H1 (cell line): ENCODE measurements at regions of chr20 and their contacts with region 1.

Region 1: DNA sequence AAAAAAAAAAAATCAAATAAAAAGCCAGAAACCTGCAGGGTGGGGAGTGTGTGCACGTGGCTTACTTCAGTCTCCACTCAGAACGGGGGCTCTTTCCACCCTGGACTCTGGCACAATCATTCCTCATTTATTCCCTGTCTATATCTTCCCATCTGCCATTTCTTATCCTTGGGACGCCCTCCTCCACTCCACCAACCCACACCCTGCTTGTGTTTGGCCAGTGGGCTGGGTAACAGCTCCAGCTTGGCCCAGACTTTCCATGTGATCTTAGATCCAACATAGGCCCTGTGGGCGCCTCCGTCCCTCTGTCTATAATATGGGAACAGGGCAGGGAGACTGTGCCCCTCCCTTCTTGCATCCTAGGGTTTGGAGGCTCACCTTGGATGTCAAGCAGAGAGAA is 68.1 kb downstream of the CD40 start:
- DNase-seq: no peak
- H3K4me3 ChIP-seq: no peak overlapping the region
- H3K27ac ChIP-seq: no peak overlapping the region
- H3K4me1 ChIP-seq: no peaks in the 10 kb centered on the region
- H3K27me3 ChIP-seq: no peaks in the 10 kb centered on the region; a peak in 1 of 7 replicates
- CTCF ChIP-seq: no peak
- EP300 ChIP-seq: no peak
- POLR2A ChIP-seq: no peak
- RAD21 ChIP-seq: no peak

Region 2: DNA sequence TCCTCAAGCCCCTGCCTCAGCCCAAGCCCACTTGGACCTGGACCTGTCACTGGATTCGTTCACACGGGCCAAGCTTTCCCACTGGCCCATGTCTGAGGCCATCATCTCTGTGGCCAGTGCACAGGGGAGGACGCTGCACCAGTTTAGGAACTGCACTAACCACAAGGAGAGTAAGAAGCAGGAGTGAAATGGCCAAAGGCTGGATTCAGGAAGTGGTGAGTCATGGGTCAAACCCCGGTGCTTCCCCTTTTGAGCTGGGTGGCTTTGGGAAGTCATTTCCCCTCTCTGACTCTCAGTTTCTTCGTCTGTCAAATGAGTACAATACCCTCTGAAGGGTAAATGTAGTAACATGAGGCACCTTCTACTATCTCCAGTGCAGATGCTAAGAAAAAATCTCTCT is 19.8 kb after region 1 on chr20:
- CTCF ChIA-PET with region 1: interaction called, 11 read pairs
- POLR2A ChIA-PET with region 1: interaction called, 3 read pairs
- DNase-seq: no peak
- H3K4me3 ChIP-seq: no peak overlapping the region
- H3K27ac ChIP-seq: no peak overlapping the region
- H3K4me1 ChIP-seq: peaks cover 0 to 11% (median 5%) of the 10 kb centered on the region in 4 experiments; a peak in 5 of 7 replicates
- H3K27me3 ChIP-seq: peaks cover 0 to 2% (median 0%) of the 10 kb centered on the region in 4 experiments; a peak in 2 of 7 replicates
- CTCF ChIP-seq: no peak
- EP300 ChIP-seq: no peak
- POLR2A ChIP-seq: no peak
- RAD21 ChIP-seq: no peak